Gastrocnemius medialis (tissue), 4 donors: ENCODE measurements at regions of chr17 and their contacts with region 1.

Region 1: DNA sequence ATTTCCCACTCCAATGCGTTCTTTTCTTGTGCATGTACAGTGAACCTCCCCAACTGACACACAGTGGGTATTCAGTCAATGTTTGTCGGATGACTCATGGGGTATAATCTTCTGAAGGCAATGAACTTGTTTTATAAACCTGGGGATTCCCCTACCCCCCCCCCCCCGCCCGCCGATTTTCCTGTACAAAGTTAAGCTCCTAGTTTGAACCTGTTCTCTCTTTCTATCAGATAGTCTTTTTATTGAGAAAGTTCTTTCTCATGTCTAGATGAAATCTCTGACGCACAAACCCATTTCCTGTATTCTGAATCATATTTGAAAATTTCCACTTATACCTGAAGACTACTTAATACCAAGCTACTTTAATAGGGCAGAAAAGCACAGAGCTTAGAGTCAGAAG is 338.3 kb downstream of the CA10 start:
- DNase-seq: no peak
- ATAC-seq: no peak
- H3K4me3 ChIP-seq: no peak overlapping the region
- H3K27ac ChIP-seq: no peak overlapping the region
- H3K4me1 ChIP-seq: no peaks in the 10 kb centered on the region
- H3K27me3 ChIP-seq: no peaks in the 10 kb centered on the region
- CTCF ChIP-seq: no peak
- POLR2A ChIP-seq: no peak

Region 2: DNA sequence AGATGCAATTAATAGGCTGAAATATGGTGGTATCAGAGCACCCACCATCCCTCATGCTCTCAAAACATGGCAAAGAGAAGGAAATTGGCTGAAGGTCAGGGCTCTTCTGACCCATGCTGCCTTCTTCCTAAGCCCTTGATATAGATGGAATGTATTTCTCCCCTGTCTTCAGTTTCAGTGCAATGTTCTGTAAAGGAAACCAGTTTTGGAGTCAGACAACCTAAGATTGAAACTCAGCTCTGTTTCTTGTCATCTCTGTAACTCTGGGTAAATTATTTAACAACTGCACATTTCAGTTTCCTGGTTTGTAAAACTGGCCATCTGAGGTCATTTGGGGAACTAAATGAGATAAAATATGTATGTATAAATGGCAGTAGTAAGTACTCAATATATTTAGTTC is 94.3 kb after region 1 on chr17:
- in situ Hi-C with region 1: loop called in 1 of 4 experiments (anchors 25 kb)
- intact Hi-C with region 1: no loop called
- DNase-seq: no peak
- ATAC-seq: no peak
- H3K4me3 ChIP-seq: no peak overlapping the region
- H3K27ac ChIP-seq: no peak overlapping the region
- H3K4me1 ChIP-seq: no peaks in the 10 kb centered on the region
- H3K27me3 ChIP-seq: no peaks in the 10 kb centered on the region
- CTCF ChIP-seq: no peak
- POLR2A ChIP-seq: no peak